GM12878 (cell line): ENCODE measurements at regions of chr13 and their contacts with region 1.

Region 1: DNA sequence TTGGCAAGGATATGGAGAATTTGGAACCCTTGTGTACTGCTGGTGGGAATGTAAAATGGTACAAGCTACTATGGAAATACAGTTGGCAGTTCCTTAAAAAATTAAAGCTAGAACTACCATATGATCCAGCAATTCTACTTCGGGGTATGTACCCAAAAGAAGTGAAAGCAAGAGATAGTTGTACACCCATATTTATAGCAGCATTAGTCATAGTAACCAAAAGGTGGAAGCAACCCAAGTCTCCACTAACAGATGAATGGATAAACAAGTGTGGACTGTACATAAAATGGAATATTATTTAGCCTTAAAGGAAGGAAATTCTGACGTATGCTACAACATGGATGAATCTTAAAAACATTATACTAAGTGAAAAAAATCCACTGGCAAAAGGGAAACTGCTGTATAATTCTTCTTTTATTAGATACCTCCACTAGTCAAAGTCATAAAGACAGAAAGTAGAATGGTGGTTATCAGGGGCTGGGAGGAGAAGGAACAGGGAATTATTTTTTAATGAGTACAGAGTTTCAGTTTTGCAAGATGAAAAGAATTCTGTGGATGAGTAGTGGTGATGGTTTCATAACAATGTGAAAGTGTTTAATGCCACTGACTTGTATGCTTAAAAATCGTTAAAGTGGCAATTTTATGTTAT is 141.6 kb downstream of the RXFP2 start:
- DNase-seq: no peak
- ATAC-seq: peak; percentile 74
- H3K4me3 ChIP-seq: no peak overlapping the region
- H3K27ac ChIP-seq: no peak overlapping the region
- H3K4me1 ChIP-seq: peaks cover 11% of the 10 kb centered on the region
- H3K27me3 ChIP-seq: no peaks in the 10 kb centered on the region
- CTCF ChIP-seq: no peak
- EP300 ChIP-seq: peak in 1 of 2 experiments; percentile 21; a peak in 1 of 4 replicates
- POLR2A ChIP-seq: no peak
- RAD21 ChIP-seq: no peak

Region 2: GRCh38 chr13:31896427-31896826 is 15.5 kb after region 1 on chr13:
- CTCF ChIA-PET with region 1: interaction called, 4 read pairs
- POLR2A ChIA-PET with region 1: interaction called, 4 read pairs
- RAD21 ChIA-PET with region 1: interaction called, 3 read pairs
- SMC1A ChIA-PET with region 1: interaction called, 7 read pairs
- in situ Hi-C with region 1: no loop called
- intact Hi-C with region 1: loop called (anchors 1 kb)
- DNase-seq: no peak
- ATAC-seq: peak; percentile 69
- H3K4me3 ChIP-seq: no peak overlapping the region
- H3K27ac ChIP-seq: no peak overlapping the region
- H3K4me1 ChIP-seq: peaks cover 7% of the 10 kb centered on the region; the same call in 1 of the 2 replicates
- H3K27me3 ChIP-seq: no peaks in the 10 kb centered on the region
- CTCF ChIP-seq: no peak
- EP300 ChIP-seq: peak; percentile 25 to 52; a peak in 1 of 4 replicates
- POLR2A ChIP-seq: no peak
- RAD21 ChIP-seq: no peak

Region 3: GRCh38 chr13:32315238-32316027 is 434.5 kb after region 1 on chr13 and contains the starts of genes BRCA2 and ZAR1L:
- CTCF ChIA-PET with region 1: no interaction called
- POLR2A ChIA-PET with region 1: no interaction called
- RAD21 ChIA-PET with region 1: no interaction called
- SMC1A ChIA-PET with region 1: no interaction called
- in situ Hi-C with region 1: no loop called
- intact Hi-C with region 1: no loop called
- DNase-seq: peak; percentile 68
- ATAC-seq: peak; percentile 93
- H3K4me3 ChIP-seq: peak within 1 kb of the TSS; percentile 78
- H3K27ac ChIP-seq: peak within 1 kb of the TSS; percentile 97
- H3K4me1 ChIP-seq: peaks cover 20% of the 10 kb centered on the region
- H3K27me3 ChIP-seq: no peaks in the 10 kb centered on the region
- CTCF ChIP-seq: no peak
- EP300 ChIP-seq: no peak; a peak in 1 of 4 replicates
- POLR2A ChIP-seq: peak; percentile 91
- RAD21 ChIP-seq: no peak
- polyA plus RNA-seq, gene BRCA2: 7.6 to 15.8 TPM
- polyA plus RNA-seq, gene ZAR1L: not detected